ENCODE measurements at regions of chr1 and their contacts with region 1.

Region 1: DNA sequence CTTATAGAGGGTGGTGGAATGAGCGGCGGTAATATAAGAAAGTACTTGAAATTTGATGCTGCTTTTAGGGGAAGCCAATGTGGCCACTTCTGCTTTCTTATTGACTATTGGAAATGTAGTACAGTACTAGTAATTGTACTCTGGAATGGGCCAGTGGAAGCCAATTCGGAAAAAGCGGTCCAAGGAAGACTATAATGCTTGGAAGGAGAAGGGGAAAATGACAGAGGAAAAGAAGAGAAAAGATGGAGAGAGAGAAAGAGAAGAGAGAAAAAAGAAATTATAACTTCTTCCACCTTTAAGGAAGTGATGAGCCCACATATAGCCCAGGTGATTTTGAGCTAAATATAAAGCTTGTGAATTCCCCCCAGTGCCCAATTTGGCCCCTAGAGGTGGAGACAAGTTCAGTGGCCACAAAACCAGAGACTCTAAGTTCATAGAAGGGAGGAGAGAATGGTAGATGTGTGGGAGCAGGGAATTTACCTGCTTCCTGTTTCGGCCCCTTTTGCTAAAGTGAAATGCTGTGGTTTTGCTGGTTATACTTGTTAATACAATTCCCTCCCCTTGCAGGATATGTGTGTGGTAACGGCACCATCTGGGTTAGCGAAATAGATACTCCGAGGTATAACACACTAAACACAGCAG is 35.7 kb upstream of the DUSP10 start:
- DNase-seq: peak; percentile 99
- ATAC-seq: peak; percentile 73
- H3K4me3 ChIP-seq: peak overlapping the region; percentile 47; the same call in 1 of the 2 replicates
- H3K27ac ChIP-seq: peak overlapping the region; percentile 89
- H3K4me1 ChIP-seq: peaks cover 61% of the 10 kb centered on the region
- H3K27me3 ChIP-seq: no peaks in the 10 kb centered on the region
- CTCF ChIP-seq: peak in 1 of 3 experiments; percentile 9; a peak in 1 of 6 replicates
- EP300 ChIP-seq: peak; percentile 97 to 98
- POLR2A ChIP-seq: no peak
- RAD21 ChIP-seq: peak; percentile 38

Region 2: DNA sequence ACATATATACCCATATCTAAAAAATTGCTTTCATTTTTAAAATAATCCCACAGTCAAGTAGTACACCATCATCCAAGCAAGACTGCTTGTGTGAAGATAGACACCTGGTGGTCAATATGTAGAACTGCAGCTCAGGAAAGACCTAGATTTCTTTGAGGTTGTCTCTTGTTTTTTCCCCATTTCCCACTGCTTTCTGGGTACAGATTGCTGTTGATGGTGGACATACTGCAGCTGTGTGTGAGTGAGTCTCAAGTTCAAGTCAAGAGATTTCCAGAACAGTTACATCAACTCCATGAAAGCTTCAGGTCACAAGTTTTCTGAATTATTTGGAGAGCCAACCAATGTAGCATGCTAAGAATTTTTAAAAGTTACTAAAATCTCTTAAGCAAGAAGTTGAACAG is 342.0 kb before region 1 on chr1:
- CTCF ChIA-PET with region 1: no interaction called
- POLR2A ChIA-PET with region 1: no interaction called
- RAD21 ChIA-PET with region 1: no interaction called
- SMC1A ChIA-PET with region 1: no interaction called
- in situ Hi-C with region 1: no loop called
- intact Hi-C with region 1: no loop called
- DNase-seq: no peak
- ATAC-seq: peak; percentile 55
- H3K4me3 ChIP-seq: no peak overlapping the region
- H3K27ac ChIP-seq: no peak overlapping the region
- H3K4me1 ChIP-seq: 0 out of 2 replicates have a peak, but pooled peaks cover 4% of the 10 kb centered on the region
- H3K27me3 ChIP-seq: no peaks in the 10 kb centered on the region
- CTCF ChIP-seq: peak; percentile 78 to 90 (median 80)
- EP300 ChIP-seq: no peak
- POLR2A ChIP-seq: no peak
- RAD21 ChIP-seq: peak; percentile 88

Region 3: DNA sequence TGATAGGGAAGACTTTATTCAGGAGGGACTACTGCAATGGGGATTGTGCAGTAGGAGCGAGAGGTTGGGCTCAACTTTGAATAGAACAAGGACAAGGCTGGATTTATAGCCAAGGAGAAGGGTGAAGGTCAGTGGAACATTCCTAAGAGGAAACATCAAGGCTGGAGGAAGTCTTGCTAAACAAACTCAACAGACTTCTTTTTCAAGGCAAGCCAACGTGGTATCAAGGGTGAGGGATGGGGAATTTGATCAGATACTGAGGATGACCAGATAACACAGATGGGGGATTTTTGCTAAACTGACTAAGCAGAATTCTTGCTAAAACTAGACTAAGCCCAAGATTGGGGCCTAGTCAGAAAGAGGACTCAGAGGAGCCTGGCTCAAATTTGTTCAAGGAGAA is 142.9 kb before region 1 on chr1:
- CTCF ChIA-PET with region 1: no interaction called
- POLR2A ChIA-PET with region 1: no interaction called
- RAD21 ChIA-PET with region 1: no interaction called
- SMC1A ChIA-PET with region 1: no interaction called
- in situ Hi-C with region 1: no loop called
- intact Hi-C with region 1: no loop called
- DNase-seq: no peak
- ATAC-seq: no peak
- H3K4me3 ChIP-seq: no peak overlapping the region
- H3K27ac ChIP-seq: no peak overlapping the region
- H3K4me1 ChIP-seq: no peaks in the 10 kb centered on the region
- H3K27me3 ChIP-seq: no peaks in the 10 kb centered on the region
- CTCF ChIP-seq: no peak
- EP300 ChIP-seq: no peak
- POLR2A ChIP-seq: no peak
- RAD21 ChIP-seq: no peak

Region 4: DNA sequence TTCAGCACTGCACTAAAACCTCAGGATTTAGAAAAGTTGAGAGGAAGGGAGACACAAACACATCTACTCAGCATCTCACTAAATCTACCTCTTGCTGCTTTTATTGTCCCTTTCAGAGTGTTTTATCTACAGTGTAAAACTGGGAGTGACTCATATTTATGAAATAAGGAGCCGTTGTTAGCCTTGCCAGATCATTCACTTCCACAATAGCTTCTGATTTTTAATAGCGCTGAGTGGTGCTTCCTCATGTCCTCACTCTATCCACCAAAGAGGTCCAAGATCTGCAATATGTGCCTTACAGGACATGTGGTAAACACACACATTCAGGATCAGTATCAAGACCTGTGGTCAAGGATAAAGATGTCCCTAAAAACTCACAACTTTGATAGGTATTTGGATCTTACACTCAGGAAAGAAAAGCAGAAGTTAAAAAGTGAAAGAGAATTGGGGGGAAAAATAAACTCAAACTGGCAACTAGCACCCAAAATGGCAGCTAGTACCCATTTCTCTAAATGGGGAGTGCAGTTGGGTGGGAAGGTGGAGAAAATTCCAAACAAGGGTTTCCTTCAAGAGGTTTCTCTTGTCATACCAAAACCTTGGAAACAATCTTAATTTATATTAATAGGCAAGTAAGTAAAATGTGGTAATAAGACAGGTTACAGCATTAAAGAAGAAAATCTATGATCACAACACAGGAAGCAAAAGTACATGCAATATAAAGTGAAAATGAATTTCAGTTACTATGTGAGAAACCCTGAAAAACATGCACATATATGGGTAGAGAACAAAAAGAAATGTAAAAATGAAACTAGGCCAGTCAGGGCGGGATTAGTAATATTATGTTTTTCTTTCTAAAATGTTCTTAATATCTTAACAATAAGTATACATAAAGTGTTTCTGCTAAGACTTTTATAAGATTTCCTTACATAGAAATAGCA is 51.5 kb before region 1 on chr1:
- CTCF ChIA-PET with region 1: interaction called, 6 read pairs
- POLR2A ChIA-PET with region 1: interaction called, 3 read pairs
- RAD21 ChIA-PET with region 1: interaction called, 10 read pairs
- SMC1A ChIA-PET with region 1: interaction called, 14 read pairs
- in situ Hi-C with region 1: no loop called
- intact Hi-C with region 1: no loop called
- DNase-seq: no peak
- ATAC-seq: peak; percentile 67
- H3K4me3 ChIP-seq: peak overlapping the region; percentile 6; the same call in 1 of the 2 replicates
- H3K27ac ChIP-seq: peak overlapping the region; percentile 92
- H3K4me1 ChIP-seq: peaks cover 52% of the 10 kb centered on the region
- H3K27me3 ChIP-seq: no peaks in the 10 kb centered on the region
- CTCF ChIP-seq: no peak
- EP300 ChIP-seq: no peak
- POLR2A ChIP-seq: no peak
- RAD21 ChIP-seq: no peak

Region 5: GRCh38 chr1:221761354-221762002 is 16.1 kb before region 1 on chr1:
- CTCF ChIA-PET with region 1: interaction called, 153 read pairs
- POLR2A ChIA-PET with region 1: interaction called, 203 read pairs
- RAD21 ChIA-PET with region 1: interaction called, 393 read pairs
- SMC1A ChIA-PET with region 1: interaction called, 510 read pairs
- in situ Hi-C with region 1: no loop called
- intact Hi-C with region 1: loop called (anchors 1 kb)
- DNase-seq: peak; percentile 91
- ATAC-seq: peak; percentile 80
- H3K4me3 ChIP-seq: peak overlapping the region; percentile 26; the same call in 1 of the 2 replicates
- H3K27ac ChIP-seq: peak overlapping the region; percentile 90
- H3K4me1 ChIP-seq: peaks cover 64% of the 10 kb centered on the region
- H3K27me3 ChIP-seq: no peaks in the 10 kb centered on the region
- CTCF ChIP-seq: no peak
- EP300 ChIP-seq: peak in 1 of 2 experiments; percentile 13; a peak in 1 of 4 replicates
- POLR2A ChIP-seq: 0 out of 2 replicates have a peak, but pooled peaks have one; percentile 26
- RAD21 ChIP-seq: 0 out of 2 replicates have a peak, but pooled peaks have one; percentile 6

Region 6: DNA sequence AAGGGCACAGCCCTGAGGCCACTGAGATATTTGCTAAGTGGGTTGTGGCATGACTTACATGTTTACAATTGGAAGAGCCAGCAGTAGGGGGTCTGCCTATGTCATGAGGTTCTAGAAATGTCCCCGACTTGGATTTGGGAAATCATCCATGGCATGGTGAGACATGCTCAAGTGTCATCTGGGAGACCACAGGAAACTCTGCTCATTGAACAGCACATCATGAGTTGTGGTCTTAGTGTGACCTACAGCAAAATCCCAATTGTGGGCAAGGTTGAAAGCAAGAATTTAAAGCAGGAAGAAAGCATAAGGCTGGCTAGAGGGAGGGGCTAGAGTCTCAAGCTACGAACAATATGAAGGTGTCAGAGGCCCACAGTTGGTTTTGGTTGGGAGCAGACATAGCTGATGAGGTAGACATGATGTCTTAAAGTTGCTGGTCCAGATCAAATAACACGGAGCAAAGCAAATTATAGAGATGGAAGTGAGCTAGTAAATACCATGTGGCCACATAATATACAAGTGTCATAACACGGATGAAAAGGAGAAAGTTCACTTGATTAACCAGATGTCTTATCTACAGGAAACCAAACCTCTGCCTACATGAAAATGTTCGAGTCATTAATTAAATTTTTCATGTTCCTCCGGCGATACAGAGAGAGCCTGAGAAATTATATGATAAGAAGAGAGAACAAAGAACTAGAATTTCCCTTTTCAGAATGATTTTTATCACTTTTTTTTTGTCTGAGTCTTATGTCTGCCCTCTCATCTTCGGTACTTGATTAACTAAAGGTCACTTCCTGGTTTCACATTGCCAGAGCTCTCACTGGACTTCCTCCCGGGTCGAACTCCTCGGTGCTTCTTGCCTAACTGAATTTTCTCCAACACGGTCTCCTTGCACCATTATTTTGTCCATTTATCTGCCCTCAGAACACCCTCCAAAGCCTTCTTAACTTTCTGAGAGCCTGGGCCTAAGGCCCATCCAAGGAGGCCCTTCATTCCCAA is 31.8 kb after region 1 on chr1:
- CTCF ChIA-PET with region 1: interaction called, 3 read pairs
- POLR2A ChIA-PET with region 1: interaction called, 5 read pairs
- RAD21 ChIA-PET with region 1: interaction called, 15 read pairs
- SMC1A ChIA-PET with region 1: interaction called, 9 read pairs
- in situ Hi-C with region 1: no loop called
- intact Hi-C with region 1: no loop called
- DNase-seq: no peak
- ATAC-seq: peak; percentile 73
- H3K4me3 ChIP-seq: 0 out of 2 replicates have a peak overlapping the region, but pooled peaks have one; percentile 0
- H3K27ac ChIP-seq: 0 out of 2 replicates have a peak overlapping the region, but pooled peaks have one; percentile 6
- H3K4me1 ChIP-seq: peaks cover 18% of the 10 kb centered on the region
- H3K27me3 ChIP-seq: no peaks in the 10 kb centered on the region
- CTCF ChIP-seq: no peak
- EP300 ChIP-seq: no peak; a peak in 1 of 4 replicates
- POLR2A ChIP-seq: no peak
- RAD21 ChIP-seq: no peak

Region 7: DNA sequence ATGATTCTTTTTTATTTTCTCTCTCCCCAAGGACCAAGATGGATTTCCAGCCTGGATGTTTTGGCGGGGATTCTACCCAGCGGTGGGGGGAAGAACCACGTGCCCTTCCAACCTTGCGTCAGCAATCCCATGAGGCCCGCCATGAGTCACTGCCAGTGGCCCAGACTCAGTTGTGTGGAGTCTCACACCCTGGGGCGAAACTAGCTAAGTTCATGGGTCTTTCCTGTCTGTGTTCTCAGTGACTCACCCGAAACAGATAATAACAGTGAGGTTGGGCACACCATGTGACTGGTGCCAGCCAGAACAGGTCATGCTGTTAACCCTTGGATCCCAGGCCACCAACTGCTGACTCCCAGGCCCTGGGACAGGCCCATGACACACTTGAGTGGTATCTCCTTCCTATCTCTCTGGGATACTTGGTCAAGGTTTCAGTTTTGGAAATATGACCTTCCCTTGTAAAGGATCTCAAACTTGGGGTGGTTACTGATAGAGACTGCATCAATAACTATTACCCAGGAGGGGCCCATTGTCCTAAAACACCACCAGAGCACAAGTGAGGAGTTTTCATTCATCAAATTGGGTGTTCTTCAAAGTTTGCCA is 62.3 kb after region 1 on chr1:
- CTCF ChIA-PET with region 1: interaction called, 3 read pairs
- POLR2A ChIA-PET with region 1: interaction called, 3 read pairs
- RAD21 ChIA-PET with region 1: interaction called, 64 read pairs
- SMC1A ChIA-PET with region 1: interaction called, 76 read pairs
- in situ Hi-C with region 1: no loop called
- intact Hi-C with region 1: loop called (anchors 1 kb)
- DNase-seq: peak; percentile 94
- ATAC-seq: peak; percentile 93
- H3K4me3 ChIP-seq: no peak overlapping the region
- H3K27ac ChIP-seq: peak overlapping the region; percentile 45; the same call in 1 of the 2 replicates
- H3K4me1 ChIP-seq: peaks cover 42% of the 10 kb centered on the region
- H3K27me3 ChIP-seq: no peaks in the 10 kb centered on the region
- CTCF ChIP-seq: no peak
- EP300 ChIP-seq: peak; percentile 97
- POLR2A ChIP-seq: no peak
- RAD21 ChIP-seq: no peak

Region 8: GRCh38 chr1:221961532-221962292 is 184.2 kb after region 1 on chr1:
- CTCF ChIA-PET with region 1: no interaction called
- POLR2A ChIA-PET with region 1: interaction called, 3 read pairs
- RAD21 ChIA-PET with region 1: interaction called, 9 read pairs
- SMC1A ChIA-PET with region 1: interaction called, 11 read pairs
- in situ Hi-C with region 1: no loop called
- intact Hi-C with region 1: no loop called
- DNase-seq: peak; percentile 55
- ATAC-seq: peak; percentile 96
- H3K4me3 ChIP-seq: no peak overlapping the region
- H3K27ac ChIP-seq: no peak overlapping the region
- H3K4me1 ChIP-seq: no peaks in the 10 kb centered on the region; the same call in 1 of the 2 replicates
- H3K27me3 ChIP-seq: no peaks in the 10 kb centered on the region
- CTCF ChIP-seq: no peak
- EP300 ChIP-seq: peak; percentile 26 to 44; a peak in 2 of 4 replicates
- POLR2A ChIP-seq: no peak
- RAD21 ChIP-seq: no peak

Region 9: DNA sequence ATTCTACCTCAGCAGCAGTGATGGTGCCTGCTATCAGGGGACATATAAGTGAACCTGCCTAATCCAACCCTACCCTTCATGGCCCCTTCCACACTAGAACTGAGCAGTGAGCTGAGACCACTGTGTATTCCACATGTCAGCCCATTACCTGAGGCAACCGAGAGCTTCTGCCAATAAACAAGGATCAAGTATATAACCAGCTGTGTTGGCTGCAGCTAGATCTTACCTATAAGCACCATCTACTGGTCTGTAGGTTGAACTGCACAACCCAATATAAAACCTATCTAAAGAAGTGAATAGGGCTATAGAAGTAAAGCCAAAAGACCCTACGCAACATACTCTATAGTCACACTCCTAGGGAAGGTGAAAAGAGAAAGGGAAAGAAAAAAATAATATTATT is 393.5 kb after region 1 on chr1:
- CTCF ChIA-PET with region 1: interaction called, 4 read pairs
- POLR2A ChIA-PET with region 1: no interaction called
- RAD21 ChIA-PET with region 1: interaction called, 3 read pairs
- SMC1A ChIA-PET with region 1: interaction called, 3 read pairs
- in situ Hi-C with region 1: no loop called
- intact Hi-C with region 1: loop called (anchors 5 kb)
- DNase-seq: peak; percentile 23
- ATAC-seq: peak; percentile 86
- H3K4me3 ChIP-seq: no peak overlapping the region
- H3K27ac ChIP-seq: no peak overlapping the region
- H3K4me1 ChIP-seq: no peaks in the 10 kb centered on the region
- H3K27me3 ChIP-seq: no peaks in the 10 kb centered on the region
- CTCF ChIP-seq: peak; percentile 47 to 78 (median 66)
- EP300 ChIP-seq: no peak
- POLR2A ChIP-seq: no peak
- RAD21 ChIP-seq: peak; percentile 78

Measured in GM12878 (cell line).